ENCODE measurements at regions of chr16 and their contacts with region 1.

Region 1: GRCh38 chr16:23847251-23847650 is 11.5 kb downstream of the PRKCB start:
- DNase-seq: no peak
- CTCF ChIP-seq: no peak

Region 2: GRCh38 chr16:23858542-23858941 is 11.3 kb after region 1 on chr16:
- CTCF ChIA-PET with region 1: interaction called, 18 read pairs
- POLR2A ChIA-PET with region 1: interaction called, 3 read pairs
- DNase-seq: no peak
- CTCF ChIP-seq: no peak

Measured in GM10248 (cell line).